Thyroid gland (tissue), 4 donors: ENCODE measurements at regions of chr16 and their contacts with region 1.

Region 1: DNA sequence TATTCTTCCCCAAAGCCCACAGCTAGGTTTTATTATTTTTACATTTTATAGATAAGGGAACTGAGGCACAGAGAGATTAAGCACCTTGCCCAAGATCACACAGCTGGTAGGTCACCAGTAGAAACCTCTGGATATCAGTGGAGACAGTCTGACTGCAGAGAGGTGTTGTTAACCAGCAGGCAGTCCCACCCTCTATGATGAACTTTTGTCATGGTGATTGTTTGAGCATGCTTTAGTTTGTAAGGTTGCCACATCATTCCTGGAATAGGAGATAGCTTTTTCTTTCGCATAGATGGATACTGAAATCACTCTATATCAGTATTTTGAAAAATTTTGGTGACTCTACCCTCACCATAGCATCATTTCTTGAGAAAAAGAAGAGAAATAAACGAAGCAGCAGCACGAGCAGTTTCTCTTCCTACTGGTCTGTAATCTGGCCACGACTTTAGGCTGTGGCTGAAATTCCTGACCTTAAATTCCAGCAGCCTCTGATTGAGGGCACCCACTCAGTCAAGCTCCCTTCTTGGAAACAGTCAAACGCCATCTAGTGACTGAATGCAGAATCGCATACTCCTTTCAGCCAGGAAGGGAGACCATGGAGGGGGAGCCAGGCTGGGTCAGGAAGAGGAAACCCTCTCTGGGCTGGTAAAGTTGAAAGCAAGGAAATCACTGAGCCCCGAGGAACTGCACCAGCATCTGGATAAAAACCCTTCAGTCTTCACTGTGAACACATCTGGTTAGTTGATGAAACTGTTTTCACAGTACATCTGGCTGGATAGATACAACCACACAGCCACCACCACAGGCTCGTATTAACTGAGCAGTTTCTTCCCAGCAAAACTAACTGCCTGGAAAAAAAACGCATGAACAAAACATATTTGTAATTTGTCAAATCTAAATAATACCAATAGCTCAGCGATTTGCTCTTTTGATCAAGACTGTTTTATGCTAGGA is 108.4 kb upstream of the XYLT1 start:
- DNase-seq: peak; percentile 75 to 76
- H3K4me3 ChIP-seq: no peak overlapping the region
- H3K27ac ChIP-seq: no peak overlapping the region
- H3K4me1 ChIP-seq: peaks cover 0 to 10% of the 10 kb centered on the region in 2 donors
- H3K27me3 ChIP-seq: no peaks in the 10 kb centered on the region
- CTCF ChIP-seq: peak; percentile 68 to 96 (median 90)
- POLR2A ChIP-seq: no peak

Region 2: DNA sequence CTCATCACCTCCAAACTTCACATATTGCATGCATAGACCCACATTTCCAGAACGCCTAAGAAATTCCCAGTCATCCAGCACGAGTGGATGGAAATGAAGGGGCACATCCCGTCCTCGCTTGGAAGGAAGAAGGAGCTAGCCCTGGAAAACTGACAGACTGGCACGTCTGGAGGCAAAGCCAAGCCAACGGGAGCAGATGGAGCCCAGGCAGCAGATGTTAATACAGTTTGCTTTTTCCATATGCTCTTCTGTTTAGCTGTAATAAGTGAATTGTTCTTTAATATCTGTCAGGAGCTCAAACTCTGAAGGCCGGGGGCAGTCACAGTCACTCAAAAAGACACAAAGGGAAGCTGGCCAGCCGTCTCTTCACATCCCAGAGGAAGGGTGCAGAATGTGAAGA is 296.2 kb before region 1 on chr16:
- intact Hi-C with region 1: loop called (anchors 10 kb)
- DNase-seq: no peak
- H3K4me3 ChIP-seq: no peak overlapping the region
- H3K27ac ChIP-seq: no peak overlapping the region
- H3K4me1 ChIP-seq: peaks cover 6 to 15% of the 10 kb centered on the region in 2 donors
- H3K27me3 ChIP-seq: no peaks in the 10 kb centered on the region
- CTCF ChIP-seq: no peak
- POLR2A ChIP-seq: no peak

Region 3: GRCh38 chr16:17476414-17477270 is 102.6 kb before region 1 on chr16:
- intact Hi-C with region 1: loop called (anchors 5 kb)
- DNase-seq: peak; percentile 57 to 61
- H3K4me3 ChIP-seq: no peak overlapping the region
- H3K27ac ChIP-seq: no peak overlapping the region
- H3K4me1 ChIP-seq: peaks cover 0 to 6% of the 10 kb centered on the region in 2 donors
- H3K27me3 ChIP-seq: no peaks in the 10 kb centered on the region
- CTCF ChIP-seq: peak in 5 of 6 experiments; percentile 19 to 79 (median 62)
- POLR2A ChIP-seq: no peak